ENCODE measurements at regions of chr22 and their contacts with region 1.

Region 1: DNA sequence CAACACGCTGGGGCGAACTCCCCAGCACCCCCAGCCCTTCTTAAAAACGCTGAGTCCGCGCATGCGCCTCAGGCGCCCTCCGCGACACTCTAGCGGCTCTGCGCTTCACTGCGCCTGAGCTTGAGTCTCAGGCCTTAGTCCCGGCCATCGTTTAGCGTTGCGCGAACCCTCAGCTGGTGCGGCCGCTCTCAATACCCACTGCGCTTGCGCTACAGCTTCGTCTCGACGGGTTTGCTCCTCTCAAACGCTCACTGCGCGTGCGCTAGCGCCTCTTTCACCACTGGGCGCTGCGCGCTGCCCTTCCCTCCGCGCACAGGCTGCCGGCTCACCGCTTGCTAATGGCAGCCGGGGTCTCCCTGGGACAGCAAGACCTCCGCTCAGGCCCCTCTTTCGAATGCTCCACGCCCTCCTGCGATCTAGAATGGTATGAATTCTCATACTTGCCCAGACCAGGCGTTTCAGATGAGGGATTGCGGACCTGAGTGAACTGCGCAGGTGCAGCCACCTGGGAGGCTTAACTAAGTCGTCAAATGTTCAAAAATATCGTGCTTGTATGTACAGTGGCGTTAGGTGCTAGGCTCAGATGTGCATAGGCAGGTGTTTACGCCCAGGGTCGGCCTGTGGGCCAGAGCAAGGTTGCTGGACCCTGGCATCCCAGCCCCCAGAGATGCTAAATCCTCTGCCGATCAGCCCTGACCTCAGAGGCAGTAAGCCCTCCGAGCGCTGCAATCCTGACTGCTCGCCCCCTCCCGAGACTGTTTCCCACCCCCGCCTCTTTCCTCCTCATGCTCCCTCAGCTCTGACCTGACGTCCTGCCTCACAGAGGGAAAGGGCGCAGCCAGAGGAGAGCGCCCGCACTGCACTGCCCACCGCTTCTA is at the start of gene SLC2A11:
- DNase-seq: peak; percentile 85 to 97 (median 90)
- ATAC-seq: peak; percentile 93 to 94
- H3K4me3 Mint-ChIP-seq: peak within 1 kb of the TSS; percentile 93 to 98 (median 96)
- H3K27ac Mint-ChIP-seq: peak within 1 kb of the TSS; percentile 81 to 96 (median 90)
- H3K4me1 Mint-ChIP-seq: peaks cover 13 to 22% (median 20%) of the 10 kb centered on the region in 4 donors
- H3K27me3 Mint-ChIP-seq: no peaks in the 10 kb centered on the region
- polyA plus RNA-seq, gene SLC2A11: 3.6 to 8.5 (median 6.3) TPM

Region 2: DNA sequence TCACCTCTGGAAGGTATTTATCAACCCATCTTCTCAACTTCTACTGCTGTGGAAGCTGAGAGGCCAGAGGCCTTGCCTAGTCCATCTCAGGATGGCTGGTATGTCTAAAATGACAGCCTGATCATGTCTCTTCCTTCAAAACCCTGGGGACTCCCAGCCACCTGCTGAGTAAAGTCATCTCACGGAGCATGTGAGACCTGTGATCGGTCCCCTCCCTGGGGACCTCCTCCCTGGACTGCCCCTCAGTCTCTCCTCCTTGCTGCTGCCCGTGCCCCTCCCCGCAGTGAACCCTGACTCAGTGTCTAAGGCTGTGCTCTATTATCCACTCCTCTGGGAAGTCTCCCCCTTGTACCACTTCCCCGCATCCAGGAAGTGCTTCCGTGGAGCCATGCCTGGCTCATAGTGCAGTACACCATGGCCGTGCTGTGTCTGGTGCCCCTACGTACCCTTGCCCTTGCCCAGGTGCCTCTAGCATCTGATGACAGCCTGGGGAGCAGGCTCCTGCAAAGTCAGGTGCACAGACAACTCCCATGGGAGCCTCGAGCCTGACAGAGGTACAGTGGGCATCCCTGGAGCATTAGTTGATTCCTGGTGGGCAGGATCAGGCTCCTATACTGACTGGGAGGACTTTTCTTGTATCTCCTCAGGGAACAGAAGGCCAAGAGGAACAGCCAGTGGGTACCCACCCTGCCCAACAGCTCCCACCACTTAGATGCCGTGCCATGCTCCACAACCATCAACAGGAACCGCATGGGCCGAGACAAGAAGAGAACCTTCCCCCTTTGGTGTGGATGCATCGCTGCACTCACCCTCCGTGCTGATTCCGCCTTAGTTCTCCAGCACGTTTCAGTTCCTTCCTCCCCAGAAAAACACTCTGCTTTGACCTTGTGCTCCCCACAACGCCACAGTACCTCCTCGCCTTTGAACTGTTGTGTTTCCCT is 57.3 kb before region 1 on chr22:
- POLR2A ChIA-PET with region 1: no interaction called
- DNase-seq: no peak
- ATAC-seq: peak in 1 of 2 donors; percentile 42
- H3K4me3 Mint-ChIP-seq: peak overlapping the region in 1 of 10 donors; percentile 67
- H3K27ac Mint-ChIP-seq: peak overlapping the region in 2 of 10 donors; percentile 70 to 73
- H3K4me1 Mint-ChIP-seq: peaks cover 0 to 31% (median 2%) of the 10 kb centered on the region in 4 donors
- H3K27me3 Mint-ChIP-seq: no peaks in the 10 kb centered on the region

Region 3: DNA sequence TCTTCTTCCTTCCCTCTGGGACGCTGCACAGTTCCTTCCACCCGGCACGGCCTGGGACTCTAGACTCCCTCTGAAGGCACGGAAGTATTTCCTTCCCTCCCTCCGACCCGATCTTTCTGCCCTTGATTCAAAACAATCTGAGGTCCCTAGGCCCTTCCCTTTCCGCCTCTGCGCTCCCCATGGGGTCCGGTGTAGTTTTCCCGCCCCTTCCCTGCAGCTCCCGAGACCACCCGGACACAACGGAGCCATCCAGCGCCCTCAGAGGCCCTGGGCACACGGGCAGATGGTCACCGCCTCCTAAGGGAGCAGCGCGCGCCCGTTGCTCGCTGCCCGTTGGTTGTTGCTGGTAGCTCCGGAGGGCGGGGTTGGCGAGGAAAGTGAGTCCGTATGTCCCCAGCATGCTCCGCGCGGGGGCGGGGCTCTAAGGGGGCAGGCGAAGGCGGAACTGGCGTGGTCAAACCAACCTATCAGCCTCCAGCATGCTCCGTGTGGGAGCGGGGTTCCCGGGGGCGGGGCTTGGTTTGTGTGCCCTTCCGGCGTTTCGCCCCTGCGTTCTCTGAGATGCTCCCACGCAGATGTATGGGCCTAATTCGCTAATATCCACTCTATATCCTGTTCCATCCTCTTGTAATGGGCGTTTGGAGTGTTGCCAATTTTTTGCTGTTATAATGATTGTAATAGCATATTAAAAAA is 56.0 kb after region 1 on chr22:
- POLR2A ChIA-PET with region 1: interaction called, 22 read pairs
- DNase-seq: peak; percentile 93 to 99 (median 98)
- ATAC-seq: peak; percentile 98 to 99
- H3K4me3 Mint-ChIP-seq: peak overlapping the region; percentile 83 to 99 (median 96)
- H3K27ac Mint-ChIP-seq: peak overlapping the region; percentile 93 to 99 (median 98)
- H3K4me1 Mint-ChIP-seq: peaks cover 7 to 19% (median 13%) of the 10 kb centered on the region in 4 donors
- H3K27me3 Mint-ChIP-seq: no peaks in the 10 kb centered on the region

Measured in naive thymus-derived CD8-positive, alpha-beta T cell (primary cell).